Caco-2 (cell line): ENCODE measurements at regions of chr6 and their contacts with region 1.

Region 1: DNA sequence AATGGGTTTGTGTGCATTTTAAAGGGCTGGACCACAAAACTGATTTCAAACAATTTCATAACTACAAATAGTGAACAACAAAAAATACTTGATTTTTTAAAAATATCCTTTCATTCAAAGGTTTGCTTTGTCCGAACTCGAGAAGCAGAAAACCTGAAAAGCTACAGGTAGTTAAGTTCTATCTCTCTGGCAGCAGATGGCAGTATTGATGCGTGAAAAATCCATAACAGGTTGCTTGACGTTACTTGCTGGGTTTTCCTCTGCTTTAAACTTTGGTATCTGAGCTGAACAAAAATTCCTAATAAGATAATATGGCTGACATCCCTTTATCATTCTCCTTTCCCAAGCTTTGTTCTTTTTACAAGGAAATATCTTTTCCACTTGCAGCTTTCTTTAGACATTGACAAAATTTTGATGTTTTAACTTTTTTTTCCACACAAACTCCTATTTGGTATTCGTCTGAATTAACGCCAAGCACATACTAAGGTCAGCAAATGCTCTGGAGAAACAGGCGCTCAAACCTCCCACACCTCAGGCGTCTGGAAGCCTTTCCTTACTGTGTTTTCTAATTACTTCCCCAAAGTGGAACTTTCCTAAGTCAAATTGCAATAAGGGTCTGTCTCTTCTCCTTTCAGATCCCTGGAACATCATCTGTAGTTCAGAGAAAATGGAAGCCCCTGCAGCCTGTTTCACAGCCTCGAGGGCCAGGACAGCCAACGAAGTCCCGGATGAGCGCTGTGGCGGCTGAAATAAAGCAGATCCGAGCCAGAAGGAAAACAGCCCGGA is 50.3 kb upstream of the GFRAL start:
- DNase-seq: peak; percentile 58 to 65
- H3K4me3 ChIP-seq: no peak overlapping the region
- H3K4me3 Mint-ChIP-seq: no peak overlapping the region
- H3K27ac Mint-ChIP-seq: no peak overlapping the region
- H3K4me1 ChIP-seq: peaks cover 18% of the 10 kb centered on the region
- H3K4me1 Mint-ChIP-seq: no peaks in the 10 kb centered on the region
- H3K27me3 ChIP-seq: no peaks in the 10 kb centered on the region
- H3K27me3 Mint-ChIP-seq: no peaks in the 10 kb centered on the region
- CTCF ChIP-seq: peak; percentile 61 to 69

Region 2: DNA sequence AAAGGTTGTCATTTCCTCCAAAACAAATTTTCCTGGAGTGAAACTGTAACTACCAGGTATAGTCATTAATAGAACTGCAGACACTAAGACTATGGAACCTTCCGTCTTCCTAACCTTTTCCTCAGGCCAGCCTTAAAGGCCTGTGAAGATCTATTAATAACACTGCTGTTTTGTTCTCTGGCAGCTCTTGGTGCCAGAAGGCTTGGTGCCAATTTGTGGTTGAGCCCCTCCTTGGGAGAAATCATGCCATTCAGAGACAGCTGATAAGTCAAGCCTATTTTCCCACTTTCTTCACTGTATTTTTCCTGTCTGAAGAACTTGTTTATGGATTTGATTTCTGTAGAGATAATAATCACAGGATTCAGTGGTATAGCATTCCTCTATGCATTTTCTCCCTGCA is 37.8 kb before region 1 on chr6:
- CTCF ChIA-PET with region 1: no interaction called
- POLR2A ChIA-PET with region 1: no interaction called
- intact Hi-C with region 1: no loop called
- DNase-seq: no peak
- H3K4me3 ChIP-seq: no peak overlapping the region
- H3K4me3 Mint-ChIP-seq: no peak overlapping the region
- H3K27ac Mint-ChIP-seq: no peak overlapping the region
- H3K4me1 ChIP-seq: no peaks in the 10 kb centered on the region
- H3K4me1 Mint-ChIP-seq: peaks cover 5% of the 10 kb centered on the region
- H3K27me3 ChIP-seq: no peaks in the 10 kb centered on the region
- H3K27me3 Mint-ChIP-seq: no peaks in the 10 kb centered on the region
- CTCF ChIP-seq: no peak

Region 3: DNA sequence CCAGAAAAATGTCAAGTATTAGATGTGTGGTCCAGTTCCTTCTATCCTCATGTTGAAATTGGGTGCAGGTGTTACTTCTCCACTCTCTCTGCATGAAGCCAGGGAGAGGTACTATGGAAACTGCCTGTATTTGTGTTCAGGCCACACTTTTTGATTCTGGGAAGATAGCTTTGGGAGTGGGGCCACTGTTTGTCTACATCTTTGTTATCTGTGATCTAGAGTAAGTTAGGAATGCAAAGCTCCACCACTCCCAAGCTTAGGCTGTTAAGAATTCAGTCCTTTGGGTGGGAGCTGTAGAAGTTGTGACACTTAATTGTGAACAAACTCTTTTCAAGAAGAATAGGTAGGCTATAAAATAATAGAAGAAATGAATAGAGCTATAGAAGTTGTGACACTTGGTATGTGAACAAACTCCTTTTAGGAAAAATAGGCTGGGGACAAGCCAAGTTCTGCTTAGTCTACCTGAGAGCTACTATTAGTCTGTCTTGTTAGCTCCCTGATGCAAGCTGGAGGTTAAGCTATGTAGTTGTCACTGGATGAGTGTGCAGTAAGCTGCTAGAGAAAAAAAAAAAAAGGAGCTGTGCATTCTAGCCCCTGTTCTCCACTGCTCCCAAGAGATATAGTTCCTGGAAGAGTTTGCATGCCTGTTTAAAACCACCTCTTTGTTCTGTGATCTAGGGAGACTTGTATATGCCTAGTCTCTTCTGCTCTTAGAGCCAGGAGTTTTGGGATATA is 43.2 kb after region 1 on chr6:
- CTCF ChIA-PET with region 1: interaction called, 13 read pairs
- POLR2A ChIA-PET with region 1: no interaction called
- intact Hi-C with region 1: loop called (anchors 1 kb)
- DNase-seq: peak; percentile 75 to 81
- H3K4me3 ChIP-seq: no peak overlapping the region
- H3K4me3 Mint-ChIP-seq: peak overlapping the region; percentile 65
- H3K27ac Mint-ChIP-seq: peak overlapping the region; percentile 100
- H3K4me1 ChIP-seq: peaks cover 28% of the 10 kb centered on the region
- H3K4me1 Mint-ChIP-seq: peaks cover 32% of the 10 kb centered on the region
- H3K27me3 ChIP-seq: no peaks in the 10 kb centered on the region
- H3K27me3 Mint-ChIP-seq: no peaks in the 10 kb centered on the region
- CTCF ChIP-seq: no peak

Region 4: GRCh38 chr6:55617272-55617671 is 340.3 kb after region 1 on chr6:
- CTCF ChIA-PET with region 1: interaction called, 3 read pairs
- POLR2A ChIA-PET with region 1: no interaction called
- intact Hi-C with region 1: loop called (anchors 5 kb)
- DNase-seq: peak in 1 of 2 experiments; percentile 50
- H3K4me3 ChIP-seq: no peak overlapping the region
- H3K4me3 Mint-ChIP-seq: no peak overlapping the region
- H3K27ac Mint-ChIP-seq: no peak overlapping the region
- H3K4me1 ChIP-seq: no peaks in the 10 kb centered on the region
- H3K4me1 Mint-ChIP-seq: no peaks in the 10 kb centered on the region
- H3K27me3 ChIP-seq: no peaks in the 10 kb centered on the region
- H3K27me3 Mint-ChIP-seq: no peaks in the 10 kb centered on the region
- CTCF ChIP-seq: peak; percentile 47 to 48

Region 5: GRCh38 chr6:55886185-55886836 is 609.4 kb after region 1 on chr6:
- CTCF ChIA-PET with region 1: interaction called, 5 read pairs
- POLR2A ChIA-PET with region 1: no interaction called
- intact Hi-C with region 1: loop called (anchors 1 kb)
- DNase-seq: no peak
- H3K4me3 ChIP-seq: no peak overlapping the region
- H3K4me3 Mint-ChIP-seq: no peak overlapping the region
- H3K27ac Mint-ChIP-seq: no peak overlapping the region
- H3K4me1 ChIP-seq: peaks cover 11% of the 10 kb centered on the region
- H3K4me1 Mint-ChIP-seq: peaks cover 4% of the 10 kb centered on the region
- H3K27me3 ChIP-seq: no peaks in the 10 kb centered on the region
- H3K27me3 Mint-ChIP-seq: no peaks in the 10 kb centered on the region
- CTCF ChIP-seq: peak; percentile 29 to 35

Region 6: GRCh38 chr6:55953335-55953734 is 676.4 kb after region 1 on chr6:
- CTCF ChIA-PET with region 1: interaction called, 5 read pairs
- POLR2A ChIA-PET with region 1: no interaction called
- intact Hi-C with region 1: loop called (anchors 1 kb)
- DNase-seq: no peak
- H3K4me3 ChIP-seq: no peak overlapping the region
- H3K4me3 Mint-ChIP-seq: no peak overlapping the region
- H3K27ac Mint-ChIP-seq: no peak overlapping the region
- H3K4me1 ChIP-seq: 0 out of 2 replicates have a peak, but pooled peaks cover 4% of the 10 kb centered on the region
- H3K4me1 Mint-ChIP-seq: no peaks in the 10 kb centered on the region
- H3K27me3 ChIP-seq: no peaks in the 10 kb centered on the region
- H3K27me3 Mint-ChIP-seq: no peaks in the 10 kb centered on the region
- CTCF ChIP-seq: no peak

Region 7: GRCh38 chr6:56292505-56293181 is 1015.7 kb after region 1 on chr6:
- CTCF ChIA-PET with region 1: no interaction called
- POLR2A ChIA-PET with region 1: no interaction called
- intact Hi-C with region 1: loop called (anchors 1 kb)
- DNase-seq: peak; percentile 46 to 56
- H3K4me3 ChIP-seq: no peak overlapping the region
- H3K4me3 Mint-ChIP-seq: no peak overlapping the region
- H3K27ac Mint-ChIP-seq: no peak overlapping the region
- H3K4me1 ChIP-seq: no peaks in the 10 kb centered on the region
- H3K4me1 Mint-ChIP-seq: peaks cover 3% of the 10 kb centered on the region
- H3K27me3 ChIP-seq: no peaks in the 10 kb centered on the region
- H3K27me3 Mint-ChIP-seq: no peaks in the 10 kb centered on the region
- CTCF ChIP-seq: peak; percentile 46 to 57